ENCODE measurements at regions of chr1 and their contacts with region 1.

Region 1: GRCh38 chr1:59699227-59699847 is 115.4 kb upstream of the HOOK1 start:
- DNase-seq: peak in 7 of 9 donors; percentile 21 to 63 (median 51)
- ATAC-seq: peak; percentile 75
- H3K4me3 ChIP-seq: no peak overlapping the region
- H3K4me3 Mint-ChIP-seq: peak overlapping the region in 1 of 10 donors; percentile 19
- H3K27ac ChIP-seq: no peak overlapping the region
- H3K27ac Mint-ChIP-seq: peak overlapping the region in 2 of 9 donors; percentile 1 to 31
- H3K4me1 ChIP-seq: peaks cover 5 to 6% of the 10 kb centered on the region in 2 donors
- H3K4me1 Mint-ChIP-seq: peaks cover 6 to 30% (median 22%) of the 10 kb centered on the region in 7 donors
- H3K27me3 ChIP-seq: no peaks in the 10 kb centered on the region
- H3K27me3 Mint-ChIP-seq: no peaks in the 10 kb centered on the region

Region 2: DNA sequence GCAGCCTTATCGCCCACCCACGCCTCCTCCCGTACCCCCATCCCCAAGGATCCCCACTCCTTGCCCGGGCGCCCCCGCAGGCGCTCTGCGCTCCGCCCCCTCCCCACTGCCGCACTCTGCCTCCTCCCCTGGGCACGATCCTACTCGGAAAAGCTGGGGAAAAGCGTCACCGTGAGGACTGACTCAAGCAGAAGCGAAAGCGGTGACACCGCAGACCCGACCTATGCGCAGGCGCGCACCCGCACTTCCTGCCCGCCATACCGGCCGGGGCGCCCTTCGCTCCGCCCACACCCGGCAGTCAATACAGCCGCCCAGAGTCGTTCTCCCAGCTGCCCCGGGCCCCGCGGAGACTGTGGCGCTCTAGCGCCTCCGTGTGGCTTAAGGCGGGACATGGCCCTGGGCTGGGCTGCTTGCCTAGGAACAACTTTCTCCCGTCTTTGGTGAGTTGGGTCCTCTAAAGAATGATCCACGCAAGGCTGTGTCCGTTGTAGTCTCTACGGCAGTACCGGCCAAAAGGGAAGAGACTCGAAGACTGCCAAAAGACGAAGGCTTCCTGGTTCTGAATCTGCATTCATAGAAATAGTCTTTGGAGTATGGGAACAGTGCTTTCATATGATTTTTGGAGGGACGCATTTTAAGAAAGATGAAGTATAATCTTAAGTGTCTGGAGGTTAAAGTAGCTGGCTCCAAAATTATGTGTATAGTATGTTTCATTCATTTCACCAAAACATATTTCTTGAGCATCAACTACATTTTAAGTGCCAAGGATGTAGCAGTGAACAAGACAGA is 1152.6 kb before region 1 on chr1 and contains the start of gene OMA1:
- CTCF ChIA-PET with region 1: no interaction called
- POLR2A ChIA-PET with region 1: interaction called, 4 read pairs
- intact Hi-C with region 1: loop called (anchors 1 to 10 kb)
- DNase-seq: peak; percentile 96 to 98 (median 98)
- ATAC-seq: peak; percentile 97
- H3K4me3 ChIP-seq: peak within 1 kb of the TSS; percentile 65
- H3K4me3 Mint-ChIP-seq: peak within 1 kb of the TSS; percentile 92 to 98 (median 96)
- H3K27ac ChIP-seq: peak within 1 kb of the TSS; percentile 95
- H3K27ac Mint-ChIP-seq: peak within 1 kb of the TSS; percentile 95 to 99 (median 99)
- H3K4me1 ChIP-seq: peaks cover 7% of the 10 kb centered on the region in 2 donors
- H3K4me1 Mint-ChIP-seq: peaks cover 11 to 44% (median 33%) of the 10 kb centered on the region in 7 donors
- H3K27me3 ChIP-seq: no peaks in the 10 kb centered on the region
- H3K27me3 Mint-ChIP-seq: peaks cover 0 to 28% (median 0%) of the 10 kb centered on the region in 5 donors
- total RNA-seq, gene OMA1: 22.7 to 72.5 (median 46.5) TPM

Region 3: GRCh38 chr1:58755468-58755872 is 943.9 kb before region 1 on chr1:
- CTCF ChIA-PET with region 1: interaction called, 4 read pairs
- POLR2A ChIA-PET with region 1: interaction called, 3 read pairs
- intact Hi-C with region 1: loop called in 1 of 2 experiments (anchors 5 kb)
- DNase-seq: peak in 6 of 9 donors; percentile 7 to 58 (median 10)
- ATAC-seq: peak; percentile 88
- H3K4me3 ChIP-seq: no peak overlapping the region
- H3K4me3 Mint-ChIP-seq: peak overlapping the region; percentile 64 to 77 (median 70)
- H3K27ac ChIP-seq: peak overlapping the region; percentile 23
- H3K27ac Mint-ChIP-seq: peak overlapping the region; percentile 51 to 86 (median 62)
- H3K4me1 ChIP-seq: peaks cover 27 to 37% of the 10 kb centered on the region in 2 donors
- H3K4me1 Mint-ChIP-seq: peaks cover 27 to 51% (median 40%) of the 10 kb centered on the region in 7 donors
- H3K27me3 ChIP-seq: no peaks in the 10 kb centered on the region
- H3K27me3 Mint-ChIP-seq: no peaks in the 10 kb centered on the region

Region 4: GRCh38 chr1:58922302-58923089 is 776.8 kb before region 1 on chr1:
- CTCF ChIA-PET with region 1: no interaction called
- POLR2A ChIA-PET with region 1: no interaction called
- intact Hi-C with region 1: loop called in 1 of 2 experiments (anchors 5 kb)
- DNase-seq: peak in 5 of 9 donors; percentile 26 to 44 (median 34)
- ATAC-seq: peak; percentile 94
- H3K4me3 ChIP-seq: no peak overlapping the region
- H3K4me3 Mint-ChIP-seq: peak overlapping the region in 8 of 10 donors; percentile 3 to 37 (median 16)
- H3K27ac ChIP-seq: no peak overlapping the region
- H3K27ac Mint-ChIP-seq: peak overlapping the region in 3 of 9 donors; percentile 44 to 77 (median 60)
- H3K4me1 ChIP-seq: peaks cover 5 to 6% of the 10 kb centered on the region in 2 donors
- H3K4me1 Mint-ChIP-seq: peaks cover 7 to 34% (median 16%) of the 10 kb centered on the region in 7 donors
- H3K27me3 ChIP-seq: no peaks in the 10 kb centered on the region
- H3K27me3 Mint-ChIP-seq: peaks cover 0 to under 1% (median 0%) of the 10 kb centered on the region in 5 donors

Region 5: GRCh38 chr1:59076612-59077011 is 622.7 kb before region 1 on chr1:
- CTCF ChIA-PET with region 1: no interaction called
- POLR2A ChIA-PET with region 1: no interaction called
- intact Hi-C with region 1: loop called in 1 of 2 experiments (anchors 1 kb)
- DNase-seq: peak in 4 of 9 donors; percentile 1 to 12 (median 9)
- ATAC-seq: no peak
- H3K4me3 ChIP-seq: no peak overlapping the region
- H3K4me3 Mint-ChIP-seq: no peak overlapping the region
- H3K27ac ChIP-seq: no peak overlapping the region
- H3K27ac Mint-ChIP-seq: peak overlapping the region in 2 of 9 donors; percentile 8 to 34
- H3K4me1 ChIP-seq: peaks cover 12 to 13% of the 10 kb centered on the region in 2 donors
- H3K4me1 Mint-ChIP-seq: peaks cover 11 to 31% (median 12%) of the 10 kb centered on the region in 7 donors
- H3K27me3 ChIP-seq: no peaks in the 10 kb centered on the region
- H3K27me3 Mint-ChIP-seq: peaks cover 0 to 5% (median 3%) of the 10 kb centered on the region in 5 donors

Region 6: DNA sequence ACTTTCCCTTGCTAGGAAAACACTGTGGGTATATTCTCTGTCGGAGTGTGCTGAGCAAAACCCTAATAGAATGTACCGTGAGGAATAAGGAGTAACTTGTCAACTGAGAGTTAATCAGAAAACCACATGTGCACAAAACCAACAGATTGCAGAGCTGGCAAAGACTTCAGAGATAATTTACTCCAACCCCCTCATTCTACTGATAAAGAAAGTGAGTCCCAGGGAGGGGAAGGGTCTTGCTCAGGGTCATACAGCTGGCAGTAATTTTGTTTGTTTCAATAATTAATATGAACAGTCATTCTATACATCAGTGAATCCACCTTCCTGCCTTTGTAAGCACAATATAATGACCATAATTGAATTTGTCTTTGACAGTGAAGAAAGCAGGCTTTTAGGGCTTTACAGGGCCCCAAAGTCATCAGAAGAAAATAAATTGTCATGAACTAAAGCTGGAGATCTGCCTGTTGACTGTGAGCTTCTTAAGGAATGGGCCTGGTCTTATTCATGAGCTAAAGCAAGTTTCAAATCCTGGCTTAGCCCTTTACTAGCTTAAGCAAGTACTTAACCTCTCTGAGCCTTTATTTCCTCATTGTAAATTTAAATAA is 48.2 kb after region 1 on chr1:
- CTCF ChIA-PET with region 1: no interaction called
- POLR2A ChIA-PET with region 1: no interaction called
- intact Hi-C with region 1: no loop called
- DNase-seq: no peak
- ATAC-seq: no peak
- H3K4me3 ChIP-seq: no peak overlapping the region
- H3K4me3 Mint-ChIP-seq: no peak overlapping the region
- H3K27ac ChIP-seq: no peak overlapping the region
- H3K27ac Mint-ChIP-seq: no peak overlapping the region
- H3K4me1 ChIP-seq: no peaks in the 10 kb centered on the region
- H3K4me1 Mint-ChIP-seq: peaks cover 0 to 2% (median 0%) of the 10 kb centered on the region in 7 donors
- H3K27me3 ChIP-seq: no peaks in the 10 kb centered on the region
- H3K27me3 Mint-ChIP-seq: peaks cover 0 to 4% (median 0%) of the 10 kb centered on the region in 5 donors

Region 7: GRCh38 chr1:59759156-59759925 is 60.0 kb after region 1 on chr1:
- CTCF ChIA-PET with region 1: interaction called, 6 read pairs
- POLR2A ChIA-PET with region 1: no interaction called
- intact Hi-C with region 1: loop called (anchors 1 to 2 kb)
- DNase-seq: peak; percentile 46 to 76 (median 64)
- ATAC-seq: peak; percentile 95
- H3K4me3 ChIP-seq: no peak overlapping the region
- H3K4me3 Mint-ChIP-seq: peak overlapping the region in 7 of 10 donors; percentile 9 to 64 (median 37)
- H3K27ac ChIP-seq: no peak overlapping the region
- H3K27ac Mint-ChIP-seq: peak overlapping the region in 2 of 9 donors; percentile 24 to 32
- H3K4me1 ChIP-seq: no peaks in the 10 kb centered on the region
- H3K4me1 Mint-ChIP-seq: peaks cover 0 to 8% (median 4%) of the 10 kb centered on the region in 7 donors
- H3K27me3 ChIP-seq: no peaks in the 10 kb centered on the region
- H3K27me3 Mint-ChIP-seq: no peaks in the 10 kb centered on the region

Measured in naive thymus-derived CD4-positive, alpha-beta T cell (primary cell).